Transverse colon (tissue), 4 donors: ENCODE measurements at regions of chr12 and their contacts with region 1.

Region 1: DNA sequence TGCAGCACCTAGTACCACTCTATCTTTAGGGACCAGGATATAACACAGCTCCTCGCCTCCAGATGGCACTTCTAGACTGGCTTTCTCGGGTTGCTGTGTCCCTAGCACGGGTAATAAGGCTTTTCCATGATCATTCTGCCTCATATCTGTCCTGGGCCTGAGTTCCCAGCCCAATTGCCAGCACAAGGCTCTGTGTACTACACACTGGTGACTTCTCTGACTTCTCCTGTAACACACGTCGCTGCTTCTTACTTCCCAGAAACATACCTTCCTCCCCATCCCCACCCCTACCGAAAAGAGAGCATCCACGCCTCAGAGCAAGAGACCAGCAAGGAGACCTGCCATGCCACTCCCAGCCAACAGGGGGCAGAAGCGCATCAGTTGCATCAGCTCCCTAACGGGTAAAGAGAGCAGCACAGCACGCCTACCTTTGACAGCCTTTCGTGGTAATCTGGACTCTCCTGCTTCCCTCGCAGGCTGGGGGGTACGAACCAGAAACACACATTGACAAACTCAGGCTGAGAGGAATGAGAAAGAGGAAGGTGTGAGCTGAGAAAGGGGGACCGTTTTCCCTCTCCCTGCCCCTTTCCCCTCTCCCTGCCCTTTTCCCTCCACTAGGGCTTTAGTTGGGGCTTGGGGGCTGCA is 21.2 kb upstream of the ZNF740 start:
- DNase-seq: peak; percentile 90
- H3K4me3 ChIP-seq: no peak overlapping the region
- H3K27ac ChIP-seq: no peak overlapping the region
- H3K4me1 ChIP-seq: peaks cover 0 to 3% (median 0%) of the 10 kb centered on the region in 4 donors
- H3K27me3 ChIP-seq: no peaks in the 10 kb centered on the region
- CTCF ChIP-seq: peak; percentile 95 to 99 (median 98)
- EP300 ChIP-seq: no peak
- POLR2A ChIP-seq: no peak

Region 2: DNA sequence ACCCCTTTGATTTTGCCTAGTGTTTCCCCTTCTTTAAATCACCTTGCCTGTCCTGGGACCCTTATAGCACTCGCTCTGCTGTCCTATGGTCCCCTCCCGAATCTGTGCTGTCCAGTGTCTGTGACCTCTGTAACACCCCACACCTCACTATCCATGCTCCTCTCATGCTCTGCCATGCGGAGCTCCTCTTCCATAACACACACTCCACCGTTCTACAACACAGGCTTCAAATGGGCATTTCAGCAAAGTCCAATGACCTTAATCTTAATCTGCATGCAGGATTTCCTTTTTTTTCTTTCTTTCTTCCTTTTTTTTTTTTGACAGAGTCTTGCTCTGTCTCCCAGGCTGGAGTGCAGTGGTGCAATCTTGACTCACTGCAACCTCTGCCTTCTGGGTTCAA is 30.1 kb before region 1 on chr12:
- in situ Hi-C with region 1: no loop called
- intact Hi-C with region 1: no loop called
- DNase-seq: no peak
- H3K4me3 ChIP-seq: no peak overlapping the region
- H3K27ac ChIP-seq: no peak overlapping the region
- H3K4me1 ChIP-seq: no peaks in the 10 kb centered on the region
- H3K27me3 ChIP-seq: no peaks in the 10 kb centered on the region
- CTCF ChIP-seq: no peak
- EP300 ChIP-seq: no peak
- POLR2A ChIP-seq: no peak

Region 3: GRCh38 chr12:53197011-53197640 is 37.8 kb after region 1 on chr12:
- in situ Hi-C with region 1: no loop called
- intact Hi-C with region 1: loop called (anchors 1 kb)
- DNase-seq: no peak
- H3K4me3 ChIP-seq: no peak overlapping the region
- H3K27ac ChIP-seq: no peak overlapping the region
- H3K4me1 ChIP-seq: peaks cover 0 to 22% (median 9%) of the 10 kb centered on the region in 4 donors
- H3K27me3 ChIP-seq: no peaks in the 10 kb centered on the region
- CTCF ChIP-seq: no peak
- EP300 ChIP-seq: no peak
- POLR2A ChIP-seq: no peak